ENCODE measurements at regions of chr17 and their contacts with region 1.

Region 1: DNA sequence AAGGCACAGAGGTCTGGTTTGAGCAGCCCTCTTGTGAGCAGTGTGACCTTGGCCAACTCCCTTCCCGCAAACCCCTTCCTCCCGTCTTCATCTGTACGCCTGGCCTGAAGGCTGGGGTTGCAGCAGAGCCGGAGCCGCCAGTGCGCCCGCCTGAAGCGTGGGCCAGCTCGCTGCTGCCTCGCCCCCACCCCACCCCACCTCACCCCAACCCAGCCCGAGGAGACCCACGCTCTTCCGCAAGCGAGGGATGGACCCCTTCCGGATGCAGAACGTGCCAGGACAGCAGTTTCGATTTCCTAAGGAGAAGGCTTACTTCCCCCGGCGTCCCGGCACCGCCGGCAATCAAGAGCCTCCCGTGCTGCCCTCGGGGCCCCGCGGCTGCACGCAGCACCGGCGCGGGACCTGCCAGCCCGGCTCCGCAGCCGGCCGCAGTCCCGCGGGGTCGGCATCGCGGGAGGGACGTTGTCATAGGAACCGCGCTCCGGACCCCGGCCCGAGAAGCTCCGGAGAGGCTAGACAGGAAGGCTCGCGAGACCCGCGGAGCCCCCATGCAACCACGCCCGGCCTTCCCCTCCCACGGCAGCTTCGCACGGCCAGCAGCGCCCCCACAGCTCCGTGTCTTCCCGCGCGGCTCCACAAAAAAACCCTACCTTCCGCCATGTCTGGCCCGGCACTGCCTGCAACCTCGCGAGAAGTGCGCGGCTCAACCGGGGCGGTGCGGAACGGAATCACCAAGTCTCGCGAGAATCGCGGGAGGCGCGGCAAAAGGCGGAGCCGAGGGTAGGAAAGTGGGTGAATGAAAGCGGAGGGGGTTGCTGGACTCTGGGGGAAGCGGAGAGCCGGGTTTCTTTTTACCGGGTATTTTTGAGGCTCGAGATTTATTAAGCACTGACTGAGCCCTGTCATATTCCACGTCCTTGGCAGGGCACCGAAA is at the start of gene ANKFY1:
- DNase-seq: peak; percentile 83
- total RNA-seq, gene ANKFY1: 12.5 and 30.2 TPM in 2 replicates

Region 2: GRCh38 chr17:4074831-4075495 is 188.6 kb before region 1 on chr17:
- in situ Hi-C with region 1: no loop called
- DNase-seq: peak; percentile 9

Region 3: DNA sequence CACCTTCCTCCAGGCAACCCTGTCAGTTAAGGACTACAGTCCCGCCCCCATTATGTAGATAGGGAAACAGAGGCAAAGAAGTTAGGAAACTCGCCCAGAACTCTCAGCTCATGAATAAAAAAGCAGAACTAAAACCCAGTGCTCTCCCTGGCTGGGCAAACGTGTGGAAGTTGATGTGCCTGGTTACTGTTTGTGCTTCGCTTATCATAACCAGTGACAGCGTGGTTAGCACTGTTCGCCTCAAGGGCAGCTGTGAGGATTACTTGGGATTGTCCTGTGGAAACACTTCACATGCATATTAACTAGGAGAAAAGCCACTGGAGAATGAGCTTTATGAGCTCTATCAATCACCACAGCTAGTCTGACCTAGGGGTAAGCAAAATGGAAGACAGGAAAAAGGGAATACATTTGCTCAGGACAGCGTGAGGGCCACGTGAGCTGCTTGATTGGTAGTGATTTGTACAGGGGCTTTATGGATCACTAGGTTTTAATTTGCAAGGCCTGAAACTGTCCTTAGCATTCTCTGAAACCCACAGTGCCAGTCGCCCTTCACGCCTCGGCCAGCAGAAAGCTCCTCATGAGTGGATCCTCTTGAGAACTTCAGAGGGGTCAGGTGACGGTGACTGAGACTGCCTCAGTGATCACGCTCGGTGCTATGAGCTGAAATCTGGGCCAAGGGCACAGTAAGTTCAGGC is 100.6 kb before region 1 on chr17:
- in situ Hi-C with region 1: no loop called
- DNase-seq: peak; percentile 51

Region 4: DNA sequence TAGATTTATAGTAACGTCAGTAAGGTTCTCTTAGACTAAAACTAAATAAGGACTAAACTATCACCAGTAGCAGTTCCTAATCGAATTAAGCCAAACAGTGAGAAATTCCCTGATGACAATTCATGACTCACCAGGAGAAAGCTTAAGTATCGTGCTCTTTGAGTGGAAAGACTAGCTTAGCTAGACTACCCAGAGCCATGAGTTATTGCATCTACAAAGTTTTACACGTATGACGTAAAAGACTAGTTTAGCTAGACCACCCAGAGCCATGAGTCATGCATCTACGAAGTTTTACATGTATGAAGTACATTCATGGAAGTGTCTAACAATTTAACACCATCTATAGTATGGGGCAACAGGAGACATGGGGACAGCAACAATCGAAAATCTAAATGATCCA is 66.3 kb after region 1 on chr17:
- in situ Hi-C with region 1: loop called (anchors 10 kb)
- DNase-seq: peak; percentile 51

Measured in Caki2 (cell line).